GM10248 (cell line): ENCODE measurements at regions of chr7 and their contacts with region 1.

Region 1: DNA sequence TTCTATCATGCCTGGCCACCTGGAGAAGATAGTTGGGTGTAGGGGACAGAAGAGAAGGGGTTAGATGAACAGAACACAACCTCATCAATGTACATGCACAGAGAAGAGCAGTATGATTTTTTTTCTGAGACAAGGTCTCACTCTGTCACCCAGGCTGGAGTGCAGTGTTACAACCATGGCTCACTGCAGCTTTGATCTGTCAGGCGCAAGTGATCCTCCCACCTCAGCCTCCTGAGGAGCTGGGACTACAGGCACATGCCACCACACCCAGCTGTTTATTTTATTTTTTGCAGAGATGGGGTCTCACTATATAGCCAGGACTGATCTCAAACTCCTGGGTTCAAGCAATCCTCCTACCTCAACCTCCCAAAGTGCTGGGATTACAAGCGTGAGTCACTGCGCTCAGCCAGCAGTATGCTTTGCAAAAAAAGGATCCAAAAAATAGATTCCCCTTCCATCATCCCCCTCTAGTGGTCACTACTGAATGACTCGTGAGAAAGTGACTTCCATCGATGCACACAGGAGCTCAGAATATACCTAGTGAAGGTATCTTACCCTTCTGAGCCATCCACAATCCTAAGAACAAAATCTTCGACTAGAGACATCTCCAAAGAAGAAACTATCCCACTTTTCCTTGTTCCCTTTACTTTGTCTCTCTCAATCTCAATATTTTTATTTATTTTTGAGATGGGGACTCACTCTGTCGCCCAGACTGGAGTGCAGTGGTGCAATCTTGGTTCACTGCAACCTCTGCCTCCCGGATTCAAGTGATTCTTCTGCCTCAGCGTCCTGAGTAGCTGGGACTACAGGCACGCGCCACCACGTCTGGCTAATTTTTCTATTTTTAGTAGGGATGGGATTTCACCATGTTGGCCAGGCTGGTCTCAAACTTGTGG is 21.0 kb downstream of the ZCWPW1 start:
- DNase-seq: peak; percentile 74
- CTCF ChIP-seq: peak; percentile 64

Region 2: GRCh38 chr7:100342765-100343164 is 64.8 kb before region 1 on chr7:
- CTCF ChIA-PET with region 1: interaction called, 12 read pairs
- POLR2A ChIA-PET with region 1: no interaction called
- DNase-seq: no peak
- CTCF ChIP-seq: no peak

Region 3: DNA sequence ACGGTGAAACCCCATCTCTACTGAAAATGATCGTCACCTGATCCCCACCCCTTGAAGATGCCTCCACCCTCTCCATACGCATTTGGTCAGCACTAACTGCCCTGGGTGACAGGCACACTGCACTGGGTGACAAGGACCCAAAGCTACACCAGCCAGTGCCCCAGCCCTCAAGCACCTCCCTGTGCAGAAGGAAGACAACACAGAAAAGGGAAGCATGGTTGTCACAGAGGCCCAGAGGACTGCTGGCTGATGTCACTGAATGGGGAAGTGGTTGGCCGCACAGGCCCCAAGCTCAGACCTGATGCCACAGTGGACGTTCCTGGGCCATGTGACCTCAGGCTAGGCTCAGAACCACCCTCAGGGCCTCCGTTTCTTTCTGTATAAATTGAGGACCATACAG is 38.4 kb before region 1 on chr7:
- CTCF ChIA-PET with region 1: interaction called, 16 read pairs
- POLR2A ChIA-PET with region 1: no interaction called
- DNase-seq: peak; percentile 82
- CTCF ChIP-seq: no peak

Region 4: GRCh38 chr7:100396421-100396982 is 11.0 kb before region 1 on chr7:
- CTCF ChIA-PET with region 1: interaction called, 26 read pairs
- POLR2A ChIA-PET with region 1: no interaction called
- DNase-seq: peak; percentile 76
- CTCF ChIP-seq: no peak